Motor neuron (in vitro differentiated cells): ENCODE measurements at regions of chr3 and their contacts with region 1.

Region 1: DNA sequence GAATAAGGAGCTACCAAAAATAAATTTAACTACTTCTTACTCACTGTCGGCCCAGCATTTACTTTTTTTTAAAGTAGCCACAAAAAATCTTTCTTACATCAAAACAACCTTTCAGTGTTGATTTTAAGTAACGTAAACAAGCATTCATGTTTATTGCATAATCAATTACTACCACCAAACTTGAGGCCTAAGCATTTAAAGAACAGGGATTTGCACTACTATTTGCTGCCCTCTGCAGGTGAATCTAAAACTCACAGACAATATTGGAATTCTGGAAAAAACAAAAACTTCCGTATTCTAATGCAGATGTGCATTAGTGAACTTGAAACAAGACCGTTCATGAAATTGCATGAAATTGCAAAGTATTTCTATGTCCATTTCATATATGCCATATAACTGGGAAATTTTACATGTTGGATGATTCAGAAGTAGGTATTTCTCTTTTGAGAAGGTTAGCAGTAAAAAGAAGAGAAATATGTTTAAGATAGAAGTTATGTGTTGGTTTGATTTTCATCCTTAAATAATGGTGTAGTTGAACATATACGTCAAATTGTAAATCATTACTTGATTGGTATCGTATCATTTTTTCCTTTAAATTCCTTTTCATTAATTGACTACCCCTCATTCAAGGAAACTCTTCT is 55.6 kb downstream of the CGGBP1 start:
- ATAC-seq: peak in 3 of 8 experiments; percentile 29
- H3K4me3 ChIP-seq: no peak overlapping the region
- H3K27ac ChIP-seq: no peak overlapping the region
- H3K4me1 ChIP-seq: no peaks in the 10 kb centered on the region

Region 2: GRCh38 chr3:87260270-87260669 is 743.0 kb before region 1 on chr3:
- in situ Hi-C with region 1: loop called in 2 of 9 experiments (anchors 25 kb)
- ATAC-seq: peak in 3 of 8 experiments; percentile 51 to 63 (median 62)
- H3K4me3 ChIP-seq: no peak overlapping the region
- H3K27ac ChIP-seq: no peak overlapping the region
- H3K4me1 ChIP-seq: peaks cover 3 to 4% of the 10 kb centered on the region in 2 donors

Region 3: GRCh38 chr3:87413814-87414213 is 589.4 kb before region 1 on chr3:
- in situ Hi-C with region 1: no loop called
- ATAC-seq: peak in 3 of 8 experiments; percentile 90 to 97 (median 93)
- H3K4me3 ChIP-seq: no peak overlapping the region
- H3K27ac ChIP-seq: no peak overlapping the region
- H3K4me1 ChIP-seq: no peaks in the 10 kb centered on the region

Region 4: GRCh38 chr3:87503900-87504508 is 499.2 kb before region 1 on chr3:
- in situ Hi-C with region 1: loop called in 1 of 9 experiments (anchors 25 kb)
- ATAC-seq: peak in 4 of 8 experiments; percentile 64 to 81 (median 70)
- H3K4me3 ChIP-seq: no peak overlapping the region
- H3K27ac ChIP-seq: no peak overlapping the region
- H3K4me1 ChIP-seq: no peaks in the 10 kb centered on the region

Region 5: GRCh38 chr3:88641033-88641604 is 637.9 kb after region 1 on chr3:
- in situ Hi-C with region 1: no loop called
- ATAC-seq: no peak
- H3K4me3 ChIP-seq: no peak overlapping the region
- H3K27ac ChIP-seq: no peak overlapping the region
- H3K4me1 ChIP-seq: no peaks in the 10 kb centered on the region